Activated T-helper 1 cell treated with anti-CD3 and anti-CD28 coated beads, Interleukin-12 subunit alpha, Interleukin-12 subunit beta, Interleukin-2, Interleukin-4 antibody, amounts not matched to agents 30 ng/mL and 10 ng/mL and 1 ng/mL, durations not matched to agents 14 hours and 24 hours and 36 hours (primary cell): ENCODE measurements at regions of chr10 and their contacts with region 1.

Region 1: GRCh38 chr10:30591249-30591670 is 38.3 kb downstream of the LYZL2 start:
- DNase-seq: peak; percentile 31
- H3K4me3 Mint-ChIP-seq: no peak overlapping the region
- H3K27ac Mint-ChIP-seq: no peak overlapping the region
- H3K4me1 Mint-ChIP-seq: no peaks in the 10 kb centered on the region
- H3K27me3 Mint-ChIP-seq: peaks cover 15% of the 10 kb centered on the region

Region 2: GRCh38 chr10:30270247-30270646 is 321.0 kb before region 1 on chr10:
- intact Hi-C with region 1: loop called (anchors 1 kb)
- DNase-seq: no peak
- H3K4me3 Mint-ChIP-seq: no peak overlapping the region
- H3K27ac Mint-ChIP-seq: no peak overlapping the region
- H3K4me1 Mint-ChIP-seq: no peaks in the 10 kb centered on the region
- H3K27me3 Mint-ChIP-seq: peaks cover 22% of the 10 kb centered on the region

Region 3: DNA sequence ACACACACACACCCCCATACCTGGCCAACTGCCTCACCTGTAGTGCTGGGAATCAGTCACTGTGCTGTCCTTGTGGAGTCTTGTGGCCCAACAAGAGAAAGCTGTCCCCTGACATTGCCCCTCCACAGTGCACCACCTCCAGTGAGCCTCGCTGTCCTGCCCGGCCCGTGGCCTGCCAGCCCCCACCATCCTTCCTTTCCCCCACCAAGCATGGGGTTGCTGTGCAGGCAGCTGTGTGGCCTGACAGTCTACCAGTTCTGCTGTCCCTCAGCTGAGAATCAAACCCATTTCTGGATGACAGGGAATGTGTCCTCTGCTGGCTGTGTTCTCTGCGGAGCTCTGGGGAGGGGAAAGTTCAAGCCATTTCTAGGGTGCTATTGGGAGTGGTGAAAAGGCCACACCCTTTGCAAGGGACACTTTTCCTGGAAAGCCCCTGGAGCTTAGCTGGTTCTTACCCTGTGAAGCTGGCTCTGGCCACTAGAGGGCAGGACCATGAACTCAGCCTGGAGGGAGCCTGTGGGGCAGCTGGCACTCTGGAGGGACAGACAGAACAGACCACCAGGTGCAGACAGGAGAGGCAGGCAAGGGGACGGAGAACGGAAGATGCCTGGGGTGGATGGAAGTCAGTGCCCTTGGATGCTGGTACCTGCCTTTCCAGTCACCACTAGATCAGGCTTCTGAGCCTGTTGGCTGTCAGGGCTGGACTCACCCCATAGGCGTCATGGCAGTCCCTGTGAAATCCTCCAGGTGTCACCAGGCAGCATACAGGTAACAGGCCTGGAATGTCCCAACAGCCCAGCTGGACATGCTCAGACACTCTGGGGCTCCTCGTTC is 231.7 kb before region 1 on chr10:
- intact Hi-C with region 1: loop called (anchors 1 kb)
- DNase-seq: peak; percentile 48
- H3K4me3 Mint-ChIP-seq: no peak overlapping the region
- H3K27ac Mint-ChIP-seq: no peak overlapping the region
- H3K4me1 Mint-ChIP-seq: peaks cover 8% of the 10 kb centered on the region
- H3K27me3 Mint-ChIP-seq: peaks cover 13% of the 10 kb centered on the region

Region 4: GRCh38 chr10:30392564-30392990 is 198.7 kb before region 1 on chr10:
- intact Hi-C with region 1: loop called (anchors 1 kb)
- DNase-seq: peak; percentile 67
- H3K4me3 Mint-ChIP-seq: no peak overlapping the region
- H3K27ac Mint-ChIP-seq: no peak overlapping the region
- H3K4me1 Mint-ChIP-seq: peaks cover 15% of the 10 kb centered on the region
- H3K27me3 Mint-ChIP-seq: peaks cover 14% of the 10 kb centered on the region

Region 5: DNA sequence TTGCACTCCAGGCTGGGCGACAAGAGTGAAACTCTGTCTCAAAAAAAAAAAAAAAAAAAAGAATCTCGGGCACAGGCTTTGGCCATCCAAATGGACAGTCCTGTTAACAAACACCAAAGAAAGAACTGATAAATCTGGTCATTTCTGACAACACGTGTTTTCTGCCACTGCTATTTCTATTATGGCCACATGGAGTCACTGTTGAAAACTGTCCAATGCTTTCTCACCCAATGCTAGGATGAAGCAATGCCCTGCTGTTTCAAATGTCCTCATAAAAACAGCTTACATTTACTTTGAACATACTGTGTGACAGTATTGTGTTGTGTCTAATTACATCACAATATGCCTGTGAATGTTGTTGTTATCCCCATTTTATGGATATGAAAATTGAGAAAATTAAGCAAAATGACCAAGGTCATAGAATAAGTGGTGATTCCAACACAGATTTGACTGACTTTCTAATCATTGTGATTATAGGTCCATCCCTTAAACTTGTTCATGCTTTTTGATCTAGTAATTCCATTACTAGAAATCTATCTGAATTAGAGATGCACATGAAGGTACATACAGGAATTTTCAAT is 177.2 kb before region 1 on chr10:
- intact Hi-C with region 1: loop called (anchors 1 kb)
- DNase-seq: no peak
- H3K4me3 Mint-ChIP-seq: no peak overlapping the region
- H3K27ac Mint-ChIP-seq: no peak overlapping the region
- H3K4me1 Mint-ChIP-seq: peaks cover 34% of the 10 kb centered on the region
- H3K27me3 Mint-ChIP-seq: no peaks in the 10 kb centered on the region

Region 6: DNA sequence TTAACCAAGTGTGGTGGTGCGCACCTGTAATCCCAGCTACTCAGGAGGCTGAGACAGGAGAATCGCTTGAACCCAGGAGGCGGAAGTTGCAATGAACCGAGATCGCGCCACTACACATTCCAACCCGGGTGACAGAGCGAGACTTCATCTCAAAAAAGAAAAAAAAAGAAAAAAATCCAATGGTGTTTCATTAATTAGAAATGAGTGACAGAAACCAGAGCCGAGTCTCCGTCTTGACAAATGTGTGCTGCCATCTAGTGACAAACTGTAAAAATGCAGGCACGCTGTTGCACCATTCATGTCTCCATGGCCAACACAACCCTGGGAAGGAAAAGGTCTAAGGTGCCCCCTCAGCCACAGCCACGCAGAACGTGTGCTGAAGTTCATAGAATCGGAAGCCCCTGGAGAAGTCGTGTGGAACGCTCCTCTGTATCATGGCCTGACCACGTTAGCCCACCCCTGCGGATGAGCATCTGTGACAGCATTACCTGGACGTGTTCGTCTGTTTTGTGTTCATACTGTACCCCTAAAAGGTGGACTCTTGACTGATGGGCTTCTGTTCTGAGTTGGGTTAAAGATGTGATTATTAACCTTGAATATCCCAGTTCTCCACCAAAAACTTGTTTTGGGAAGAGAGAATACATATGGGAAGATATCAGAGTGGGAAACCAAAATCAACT is 56.7 kb before region 1 on chr10:
- intact Hi-C with region 1: loop called (anchors 1 kb)
- DNase-seq: peak; percentile 58
- H3K4me3 Mint-ChIP-seq: no peak overlapping the region
- H3K27ac Mint-ChIP-seq: peak overlapping the region; percentile 2
- H3K4me1 Mint-ChIP-seq: peaks cover 49% of the 10 kb centered on the region
- H3K27me3 Mint-ChIP-seq: no peaks in the 10 kb centered on the region

Region 7: GRCh38 chr10:30546511-30546910 is 44.7 kb before region 1 on chr10:
- intact Hi-C with region 1: no loop called
- DNase-seq: no peak
- H3K4me3 Mint-ChIP-seq: no peak overlapping the region
- H3K27ac Mint-ChIP-seq: no peak overlapping the region
- H3K4me1 Mint-ChIP-seq: peaks cover 18% of the 10 kb centered on the region
- H3K27me3 Mint-ChIP-seq: no peaks in the 10 kb centered on the region